ENCODE measurements at regions of chr5 and their contacts with region 1.

Region 1: DNA sequence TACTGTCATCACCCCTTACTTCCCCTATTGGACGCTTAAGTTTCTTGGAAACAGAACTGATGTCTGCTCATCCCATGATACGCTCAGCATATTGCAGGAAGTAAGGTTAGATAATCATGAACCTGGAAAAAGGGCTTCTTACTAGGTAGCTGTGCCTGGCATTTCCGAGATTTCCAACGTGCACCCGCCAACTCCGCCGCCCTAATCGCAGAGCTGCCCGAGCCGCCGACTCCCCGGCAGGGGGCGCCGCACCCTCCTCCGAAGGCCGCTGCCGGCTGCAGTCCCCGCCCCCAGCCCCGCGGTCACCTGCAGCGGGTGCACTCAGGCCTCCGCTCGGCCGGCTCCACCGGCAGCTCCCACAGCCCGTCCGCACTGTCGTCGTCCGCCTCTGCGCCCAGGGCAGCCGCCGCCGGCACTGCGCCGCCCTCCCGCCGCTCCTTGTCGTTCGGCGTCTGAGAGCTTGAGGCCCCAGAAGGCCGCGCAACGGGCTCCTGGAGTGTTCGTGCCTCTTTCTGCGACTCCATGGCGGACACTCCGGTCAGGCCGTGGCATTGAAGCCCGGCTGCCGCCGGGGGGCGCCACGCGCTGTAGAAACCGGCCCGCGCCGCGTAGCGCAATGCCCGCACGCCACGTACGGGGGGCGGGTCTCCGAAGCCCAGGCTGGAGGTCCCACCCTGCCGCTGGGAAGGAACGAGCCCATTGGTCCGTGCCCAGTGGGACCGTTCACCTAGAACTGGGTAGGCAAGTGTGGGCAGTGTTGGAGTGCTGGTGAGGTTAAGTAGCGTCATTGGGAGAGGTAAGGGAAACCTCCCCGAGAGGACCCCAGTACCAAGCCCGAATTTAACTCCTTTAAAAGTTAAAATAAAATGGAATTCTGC is at the start of gene DTWD2:
- DNase-seq: peak; percentile 96
- H3K4me3 ChIP-seq: peak within 1 kb of the TSS; percentile 51 to 86 (median 74)
- H3K27ac ChIP-seq: peak within 1 kb of the TSS; percentile 90 to 97 (median 92)
- H3K4me1 ChIP-seq: peaks cover 0 to 17% (median 8%) of the 10 kb centered on the region in 4 donors
- H3K27me3 ChIP-seq: no peaks in the 10 kb centered on the region
- CTCF ChIP-seq: peak; percentile 84 to 97 (median 86)
- EP300 ChIP-seq: no peak
- POLR2A ChIP-seq: peak; percentile 62
- total RNA-seq, gene DTWD2: 13.1 to 34.0 (median 23.0) TPM

Region 2: GRCh38 chr5:118946138-118946800 is 42.0 kb before region 1 on chr5:
- in situ Hi-C with region 1: no loop called
- intact Hi-C with region 1: no loop called
- DNase-seq: no peak
- H3K4me3 ChIP-seq: no peak overlapping the region
- H3K27ac ChIP-seq: no peak overlapping the region
- H3K4me1 ChIP-seq: no peaks in the 10 kb centered on the region
- H3K27me3 ChIP-seq: no peaks in the 10 kb centered on the region
- CTCF ChIP-seq: no peak
- EP300 ChIP-seq: no peak
- POLR2A ChIP-seq: no peak

Region 3: DNA sequence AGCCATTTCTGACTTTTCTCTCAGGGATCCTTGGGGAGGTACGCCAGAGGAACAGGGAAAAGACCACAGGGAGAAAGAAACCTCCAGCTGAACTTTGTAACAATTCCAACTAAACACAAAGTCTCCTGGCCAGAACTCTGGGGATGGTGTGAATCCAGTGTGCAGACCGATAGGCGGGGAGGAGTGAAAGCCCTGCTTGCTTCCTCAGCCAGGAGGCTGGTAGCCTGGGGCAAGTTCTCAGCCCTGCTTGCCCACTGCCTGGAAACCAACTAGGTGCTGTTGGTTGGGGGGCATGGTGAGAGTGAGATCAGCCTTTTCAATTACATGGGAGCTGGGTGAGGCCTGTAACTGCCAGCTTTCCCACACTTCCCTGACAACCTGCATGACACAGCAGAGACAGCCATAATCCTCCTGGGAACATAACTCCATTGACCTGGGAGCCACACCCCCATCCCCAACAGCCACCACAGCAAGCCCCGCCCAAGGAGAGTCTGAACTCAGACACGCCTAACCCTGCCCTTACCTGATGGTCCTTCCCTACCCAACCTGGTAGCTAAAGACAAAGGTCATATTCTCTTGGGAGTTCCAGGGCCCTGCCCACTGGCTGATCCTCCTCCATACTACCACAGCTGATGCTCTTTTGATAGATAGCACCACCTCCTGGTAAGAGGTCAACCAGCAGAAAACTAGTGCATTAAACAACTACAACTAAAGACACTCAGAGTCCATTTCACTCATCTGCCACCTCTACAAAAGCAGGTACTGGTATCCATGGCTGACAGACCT is 267.5 kb after region 1 on chr5:
- in situ Hi-C with region 1: loop called in 2 of 4 experiments (anchors 10 to 25 kb)
- intact Hi-C with region 1: no loop called
- DNase-seq: peak; percentile 85
- H3K4me3 ChIP-seq: no peak overlapping the region
- H3K27ac ChIP-seq: peak overlapping the region; percentile 64 to 85 (median 79)
- H3K4me1 ChIP-seq: peaks cover 0 to 13% (median 2%) of the 10 kb centered on the region in 4 donors
- H3K27me3 ChIP-seq: no peaks in the 10 kb centered on the region
- CTCF ChIP-seq: peak; percentile 14 to 73 (median 41)
- EP300 ChIP-seq: no peak
- POLR2A ChIP-seq: peak; percentile 20

Region 4: GRCh38 chr5:119267958-119268386 is 279.7 kb after region 1 on chr5:
- in situ Hi-C with region 1: loop called in 1 of 4 experiments (anchors 25 kb)
- intact Hi-C with region 1: no loop called
- DNase-seq: peak; percentile 92
- H3K4me3 ChIP-seq: peak overlapping the region; percentile 56 to 85 (median 72)
- H3K27ac ChIP-seq: peak overlapping the region; percentile 96 to 98 (median 97)
- H3K4me1 ChIP-seq: peaks cover 0 to 21% (median 10%) of the 10 kb centered on the region in 4 donors
- H3K27me3 ChIP-seq: no peaks in the 10 kb centered on the region
- CTCF ChIP-seq: peak; percentile 26 to 72 (median 43)
- EP300 ChIP-seq: no peak
- POLR2A ChIP-seq: no peak